Activated naive CD4-positive, alpha-beta T cell treated with anti-CD3 and anti-CD28 coated beads for 36 hours (primary cell): ENCODE measurements at regions of chr6 and their contacts with region 1.

Region 1: GRCh38 chr6:72649032-72649984 is 27.4 kb downstream of the KCNQ5 start:
- DNase-seq: peak; percentile 57
- H3K4me3 Mint-ChIP-seq: no peak overlapping the region
- H3K27ac Mint-ChIP-seq: peak overlapping the region; percentile 60
- H3K4me1 Mint-ChIP-seq: peaks cover 57% of the 10 kb centered on the region
- H3K27me3 Mint-ChIP-seq: no peaks in the 10 kb centered on the region

Region 2: GRCh38 chr6:72669324-72669723 is 20.0 kb after region 1 on chr6:
- CTCF ChIA-PET with region 1: no interaction called
- intact Hi-C with region 1: no loop called
- DNase-seq: peak; percentile 27
- H3K4me3 Mint-ChIP-seq: no peak overlapping the region
- H3K27ac Mint-ChIP-seq: no peak overlapping the region
- H3K4me1 Mint-ChIP-seq: peaks cover 28% of the 10 kb centered on the region
- H3K27me3 Mint-ChIP-seq: no peaks in the 10 kb centered on the region

Region 3: GRCh38 chr6:72740135-72740534 is 90.8 kb after region 1 on chr6:
- CTCF ChIA-PET with region 1: no interaction called
- intact Hi-C with region 1: loop called (anchors 2 kb)
- DNase-seq: peak; percentile 22
- H3K4me3 Mint-ChIP-seq: no peak overlapping the region
- H3K27ac Mint-ChIP-seq: peak overlapping the region; percentile 4
- H3K4me1 Mint-ChIP-seq: peaks cover 30% of the 10 kb centered on the region
- H3K27me3 Mint-ChIP-seq: no peaks in the 10 kb centered on the region

Region 4: GRCh38 chr6:72748759-72749158 is 99.5 kb after region 1 on chr6:
- CTCF ChIA-PET with region 1: no interaction called
- intact Hi-C with region 1: loop called (anchors 2 kb)
- DNase-seq: peak; percentile 28
- H3K4me3 Mint-ChIP-seq: no peak overlapping the region
- H3K27ac Mint-ChIP-seq: no peak overlapping the region
- H3K4me1 Mint-ChIP-seq: peaks cover 7% of the 10 kb centered on the region
- H3K27me3 Mint-ChIP-seq: no peaks in the 10 kb centered on the region

Region 5: DNA sequence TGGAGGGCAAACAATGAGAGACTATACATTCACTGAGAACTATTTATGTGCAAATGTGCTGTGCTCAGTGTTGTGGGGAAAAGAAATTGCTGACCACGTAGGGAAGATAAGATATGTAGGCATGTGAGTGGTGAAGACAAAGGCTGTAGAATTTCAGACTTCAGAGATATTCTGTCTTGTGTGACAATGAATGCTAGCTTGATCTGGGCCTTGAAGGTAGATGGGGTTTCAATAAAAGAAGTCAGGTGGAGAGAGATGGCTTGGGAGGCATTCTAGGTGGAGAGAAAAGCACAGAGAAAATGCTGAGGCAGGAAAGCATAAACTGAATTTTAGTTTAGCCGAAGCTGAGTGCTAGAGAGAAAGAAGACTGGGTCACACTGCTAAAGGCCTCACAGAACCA is 928.4 kb after region 1 on chr6:
- CTCF ChIA-PET with region 1: no interaction called
- intact Hi-C with region 1: no loop called
- DNase-seq: no peak
- H3K4me3 Mint-ChIP-seq: no peak overlapping the region
- H3K27ac Mint-ChIP-seq: no peak overlapping the region
- H3K4me1 Mint-ChIP-seq: peaks cover 23% of the 10 kb centered on the region
- H3K27me3 Mint-ChIP-seq: no peaks in the 10 kb centered on the region